Posterior cingulate gyrus (tissue), 11 donors: ENCODE measurements at regions of chr7 and their contacts with region 1.

Region 1: GRCh38 chr7:98135984-98136383 is 29.3 kb downstream of the LMTK2 start:
- DNase-seq: no peak

Region 2: DNA sequence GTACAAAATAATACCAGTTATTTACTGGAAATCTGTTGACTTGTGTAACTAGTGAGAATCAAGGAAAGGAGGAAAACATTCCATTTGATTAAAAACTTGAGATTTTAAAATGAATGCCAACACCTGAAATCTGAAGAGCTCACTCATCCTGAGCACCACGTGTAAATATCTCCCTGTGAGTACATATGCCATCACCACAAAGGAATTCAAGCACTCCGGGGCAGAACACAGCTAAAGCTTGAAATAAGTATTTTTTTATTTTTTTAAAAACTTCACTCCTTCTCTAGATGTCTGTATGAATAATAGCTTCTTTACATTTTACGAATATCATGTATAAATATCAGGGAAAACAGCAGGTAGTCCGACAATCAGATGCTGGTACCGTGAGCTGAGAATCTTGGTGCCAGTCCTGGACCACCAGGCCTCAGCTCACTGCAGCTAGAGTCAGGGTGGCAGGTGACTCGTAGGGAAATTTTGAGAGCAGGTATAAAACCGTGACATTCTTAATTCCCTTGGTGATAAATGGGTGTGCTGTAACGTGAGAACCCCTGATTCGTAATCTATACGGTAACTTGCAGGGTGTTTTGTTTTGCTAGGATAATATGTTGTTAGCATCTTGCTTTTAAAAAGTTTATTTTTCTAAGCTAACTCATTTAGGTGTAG is 16.6 kb before region 1 on chr7:
- intact Hi-C with region 1: loop called (anchors 1 kb)
- DNase-seq: no peak